Thyroid gland (tissue), 4 donors: ENCODE measurements at regions of chr5 and their contacts with region 1.

Region 1: GRCh38 chr5:163505368-163506094 is at the start of gene MAT2B:
- DNase-seq: peak; percentile 96 to 97
- H3K4me3 ChIP-seq: peak within 1 kb of the TSS; percentile 20 to 63 (median 43)
- H3K27ac ChIP-seq: peak within 1 kb of the TSS; percentile 93 to 99 (median 96)
- H3K4me1 ChIP-seq: peaks cover 40 to 53% of the 10 kb centered on the region in 2 donors
- H3K27me3 ChIP-seq: no peaks in the 10 kb centered on the region
- CTCF ChIP-seq: peak in 3 of 6 experiments; percentile 28 to 37 (median 36)
- POLR2A ChIP-seq: peak; percentile 82 to 97
- total RNA-seq, gene MAT2B: 74.0 to 110 (median 101) TPM

Region 2: GRCh38 chr5:163459922-163460766 is 45.4 kb before region 1 on chr5 and contains the starts of genes HMMR and NUDCD2:
- intact Hi-C with region 1: loop called (anchors 2 kb)
- DNase-seq: peak; percentile 94 to 97
- H3K4me3 ChIP-seq: peak within 1 kb of the TSS; percentile 45 to 67 (median 55)
- H3K27ac ChIP-seq: peak within 1 kb of the TSS; percentile 92 to 98 (median 97)
- H3K4me1 ChIP-seq: peaks cover 14 to 18% of the 10 kb centered on the region in 2 donors
- H3K27me3 ChIP-seq: no peaks in the 10 kb centered on the region
- CTCF ChIP-seq: peak in 1 of 6 experiments; percentile 25
- POLR2A ChIP-seq: peak in 1 of 2 donors; percentile 87
- total RNA-seq, gene HMMR: 0.56 to 1.8 (median 0.68) TPM
- total RNA-seq, gene NUDCD2: 7.0 to 19.5 (median 14.8) TPM

Region 3: DNA sequence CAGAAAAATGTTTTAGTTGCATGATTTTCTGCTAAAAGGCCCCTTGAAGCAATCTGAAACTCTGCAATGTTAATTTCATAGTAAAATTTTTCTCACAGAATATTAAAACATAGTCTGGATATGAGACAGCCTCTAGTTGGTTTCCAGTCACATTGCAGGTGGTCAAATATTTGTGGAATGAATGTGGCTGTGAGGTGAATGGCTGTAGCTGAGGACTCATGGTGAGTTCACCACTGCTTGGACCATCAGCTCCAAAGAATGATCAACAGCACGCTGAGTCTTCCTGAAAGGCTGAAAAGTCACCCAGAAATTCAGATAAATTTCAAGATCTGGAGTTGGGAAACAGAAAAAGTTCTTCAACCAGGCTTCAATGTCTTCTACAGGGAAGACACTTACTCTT is 79.7 kb after region 1 on chr5:
- intact Hi-C with region 1: no loop called
- DNase-seq: no peak
- H3K4me3 ChIP-seq: no peak overlapping the region
- H3K27ac ChIP-seq: no peak overlapping the region
- H3K4me1 ChIP-seq: peaks cover 0 to 6% of the 10 kb centered on the region in 2 donors
- H3K27me3 ChIP-seq: no peaks in the 10 kb centered on the region
- CTCF ChIP-seq: no peak
- POLR2A ChIP-seq: no peak